H1 (cell line): ENCODE measurements at regions of chr1 and their contacts with region 1.

Region 1: DNA sequence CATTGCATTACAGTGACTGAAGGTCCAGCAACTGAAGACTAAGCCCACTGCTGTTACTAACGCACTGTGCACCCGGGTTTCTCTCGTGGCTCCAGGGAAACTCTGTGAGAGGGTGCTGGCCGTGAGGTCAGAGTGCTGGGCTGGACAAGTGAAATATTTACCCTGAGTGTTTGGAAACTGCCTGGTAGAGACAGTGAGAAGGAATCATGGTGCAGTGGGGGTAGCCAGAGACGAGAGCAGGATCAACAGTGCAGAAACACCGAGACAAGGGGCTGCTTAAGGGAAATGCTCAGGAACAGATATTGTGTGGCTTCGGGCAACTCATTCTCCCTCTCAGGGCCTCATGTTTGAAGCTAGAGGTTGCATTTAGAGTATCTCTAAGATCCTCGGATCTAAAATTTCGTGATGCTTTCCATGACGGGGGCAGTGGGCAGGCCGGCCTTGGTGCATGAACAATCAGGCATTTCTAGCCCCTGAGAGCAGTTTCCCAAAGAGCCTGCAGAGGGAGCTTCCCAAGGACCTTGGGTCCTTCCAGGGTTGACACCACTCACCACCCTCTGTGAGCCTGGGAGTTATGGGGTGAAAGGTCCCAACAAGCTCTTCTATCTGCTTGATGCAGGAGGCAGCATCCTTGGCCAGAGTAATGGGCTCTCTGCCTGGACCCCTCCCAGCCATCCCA is 9.7 kb downstream of the CD2 start:
- DNase-seq: peak in 1 of 2 experiments; percentile 66
- H3K4me3 ChIP-seq: no peak overlapping the region
- H3K27ac ChIP-seq: no peak overlapping the region
- H3K4me1 ChIP-seq: no peaks in the 10 kb centered on the region
- H3K27me3 ChIP-seq: no peaks in the 10 kb centered on the region
- CTCF ChIP-seq: peak; percentile 59 to 76 (median 65)
- EP300 ChIP-seq: no peak
- POLR2A ChIP-seq: no peak
- RAD21 ChIP-seq: peak; percentile 54 to 60

Region 2: DNA sequence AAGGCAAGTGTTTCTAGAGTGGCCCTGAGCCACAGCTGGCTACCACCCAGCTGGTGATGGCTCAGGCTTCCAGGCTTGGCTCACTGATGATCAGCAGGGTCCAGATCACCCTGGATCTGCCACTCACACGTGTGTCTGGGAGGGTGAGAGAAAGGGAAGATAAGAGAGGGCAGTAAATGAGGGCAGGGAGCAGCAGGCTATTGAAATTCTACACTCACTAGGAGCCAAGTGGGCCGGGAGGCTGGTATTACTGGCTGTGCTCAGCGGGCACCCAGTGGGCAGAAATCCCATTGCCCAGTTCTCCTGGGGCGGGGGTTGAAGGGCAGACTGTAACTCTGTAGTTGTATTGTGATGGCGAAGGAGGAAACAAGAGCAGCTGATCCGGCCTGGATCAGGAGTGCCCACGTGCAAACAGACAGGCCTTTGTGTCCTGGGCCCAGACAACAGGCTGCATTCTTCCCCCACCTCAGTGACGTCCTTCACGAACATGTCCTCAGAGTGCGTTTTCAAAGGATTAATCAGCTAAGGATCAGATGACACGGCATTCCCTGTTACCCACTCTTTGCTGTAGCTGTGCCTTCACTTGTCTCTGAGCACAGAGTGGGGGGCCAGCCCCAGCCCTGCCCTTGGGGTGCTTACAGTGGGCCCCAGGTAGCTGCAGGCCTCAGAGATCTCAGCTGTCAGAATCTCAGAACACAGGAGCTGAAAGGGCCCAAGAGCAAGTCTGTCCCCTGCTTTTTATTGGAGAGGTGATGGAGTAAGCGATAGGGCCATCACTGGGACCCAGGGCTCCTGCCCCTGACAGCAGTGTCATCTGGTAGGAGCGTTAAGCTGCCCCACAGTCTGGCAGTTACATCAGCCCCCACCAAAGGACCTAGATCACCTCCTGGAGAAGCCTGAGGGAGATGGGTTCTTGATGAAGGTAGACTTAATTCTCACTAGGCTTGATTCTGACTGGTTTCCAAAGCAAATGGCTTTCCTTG is 330.4 kb before region 1 on chr1:
- CTCF ChIA-PET with region 1: no interaction called
- POLR2A ChIA-PET with region 1: no interaction called
- DNase-seq: no peak
- H3K4me3 ChIP-seq: no peak overlapping the region
- H3K27ac ChIP-seq: no peak overlapping the region
- H3K4me1 ChIP-seq: peaks cover 0 to 3% (median 0%) of the 10 kb centered on the region in 4 experiments; a peak in 1 of 7 replicates
- H3K27me3 ChIP-seq: no peaks in the 10 kb centered on the region
- CTCF ChIP-seq: no peak
- EP300 ChIP-seq: no peak
- POLR2A ChIP-seq: no peak
- RAD21 ChIP-seq: no peak

Region 3: GRCh38 chr1:116748272-116748671 is 15.7 kb before region 1 on chr1:
- CTCF ChIA-PET with region 1: interaction called, 21 read pairs
- POLR2A ChIA-PET with region 1: no interaction called
- DNase-seq: no peak
- H3K4me3 ChIP-seq: no peak overlapping the region
- H3K27ac ChIP-seq: no peak overlapping the region
- H3K4me1 ChIP-seq: no peaks in the 10 kb centered on the region
- H3K27me3 ChIP-seq: no peaks in the 10 kb centered on the region
- CTCF ChIP-seq: no peak
- EP300 ChIP-seq: no peak
- POLR2A ChIP-seq: no peak
- RAD21 ChIP-seq: no peak

Region 4: GRCh38 chr1:116785006-116785405 is 21.1 kb after region 1 on chr1:
- CTCF ChIA-PET with region 1: interaction called, 17 read pairs
- POLR2A ChIA-PET with region 1: interaction called, 3 read pairs
- DNase-seq: peak in 1 of 2 experiments; percentile 26
- H3K4me3 ChIP-seq: no peak overlapping the region
- H3K27ac ChIP-seq: no peak overlapping the region
- H3K4me1 ChIP-seq: no peaks in the 10 kb centered on the region
- H3K27me3 ChIP-seq: no peaks in the 10 kb centered on the region
- CTCF ChIP-seq: no peak
- EP300 ChIP-seq: no peak
- POLR2A ChIP-seq: no peak
- RAD21 ChIP-seq: no peak

Region 5: DNA sequence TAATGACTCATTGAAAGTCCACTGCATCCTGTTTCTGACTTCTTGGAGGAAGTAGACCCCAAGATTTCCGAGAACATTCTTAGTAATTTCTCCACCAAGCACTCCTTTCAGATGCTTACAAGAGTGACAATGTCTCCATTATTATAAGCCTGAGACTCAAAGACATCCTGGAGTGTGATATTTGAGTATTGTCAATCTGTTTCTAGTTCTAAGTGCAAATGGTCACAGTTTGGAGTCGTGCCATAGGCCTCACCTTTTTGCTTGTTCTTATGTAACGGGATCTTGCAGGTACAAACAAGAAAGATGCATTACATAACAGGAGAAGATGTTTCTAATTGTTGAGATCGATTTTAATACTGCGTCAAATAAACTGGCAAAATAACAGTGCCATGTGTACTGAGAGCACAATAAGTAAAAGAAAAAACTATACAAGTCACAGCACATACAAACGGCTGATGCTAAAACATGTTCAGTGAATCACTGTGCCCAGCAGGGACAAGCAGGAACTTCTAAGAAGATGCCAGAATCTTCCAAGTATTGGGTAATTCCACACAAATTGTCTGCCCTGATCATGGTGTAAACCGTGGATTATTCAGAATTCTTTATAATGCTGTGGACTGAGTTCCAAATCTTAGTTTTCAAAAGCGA is 44.4 kb after region 1 on chr1:
- CTCF ChIA-PET with region 1: interaction called, 23 read pairs
- POLR2A ChIA-PET with region 1: no interaction called
- DNase-seq: no peak
- H3K4me3 ChIP-seq: no peak overlapping the region
- H3K27ac ChIP-seq: no peak overlapping the region
- H3K4me1 ChIP-seq: peaks cover 0 to 7% (median 0%) of the 10 kb centered on the region in 4 experiments; a peak in 4 of 7 replicates
- H3K27me3 ChIP-seq: no peaks in the 10 kb centered on the region
- CTCF ChIP-seq: no peak
- EP300 ChIP-seq: no peak
- POLR2A ChIP-seq: no peak
- RAD21 ChIP-seq: no peak

Region 6: GRCh38 chr1:116873680-116874271 is 109.8 kb after region 1 on chr1:
- CTCF ChIA-PET with region 1: interaction called, 22 read pairs
- POLR2A ChIA-PET with region 1: no interaction called
- DNase-seq: no peak
- H3K4me3 ChIP-seq: no peak overlapping the region
- H3K27ac ChIP-seq: no peak overlapping the region
- H3K4me1 ChIP-seq: peaks cover 2 to 14% (median 12%) of the 10 kb centered on the region in 4 experiments
- H3K27me3 ChIP-seq: no peaks in the 10 kb centered on the region
- CTCF ChIP-seq: no peak
- EP300 ChIP-seq: no peak
- POLR2A ChIP-seq: no peak
- RAD21 ChIP-seq: no peak

Region 7: DNA sequence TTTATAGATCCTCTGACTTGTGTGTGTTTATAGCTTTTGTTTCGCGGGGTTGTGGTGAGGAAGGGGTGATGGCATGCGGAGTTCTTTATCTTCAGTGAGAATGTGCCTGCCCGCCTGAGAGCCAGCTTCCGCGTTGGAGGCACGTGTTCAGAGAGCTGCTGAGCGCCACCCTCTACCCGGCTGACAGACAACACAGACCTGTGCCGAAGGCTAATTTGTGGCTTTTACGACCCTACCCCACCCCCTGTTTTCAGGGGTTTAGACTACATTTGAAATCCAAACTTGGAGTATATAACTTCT is 223.3 kb after region 1 on chr1:
- CTCF ChIA-PET with region 1: no interaction called
- POLR2A ChIA-PET with region 1: no interaction called
- DNase-seq: no peak
- H3K4me3 ChIP-seq: no peak overlapping the region
- H3K27ac ChIP-seq: no peak overlapping the region
- H3K4me1 ChIP-seq: peaks cover 0 to 12% (median 3%) of the 10 kb centered on the region in 4 experiments; a peak in 3 of 7 replicates
- H3K27me3 ChIP-seq: no peaks in the 10 kb centered on the region
- CTCF ChIP-seq: no peak
- EP300 ChIP-seq: no peak
- POLR2A ChIP-seq: no peak
- RAD21 ChIP-seq: no peak